ENCODE measurements at regions of chr15 and their contacts with region 1.

Region 1: DNA sequence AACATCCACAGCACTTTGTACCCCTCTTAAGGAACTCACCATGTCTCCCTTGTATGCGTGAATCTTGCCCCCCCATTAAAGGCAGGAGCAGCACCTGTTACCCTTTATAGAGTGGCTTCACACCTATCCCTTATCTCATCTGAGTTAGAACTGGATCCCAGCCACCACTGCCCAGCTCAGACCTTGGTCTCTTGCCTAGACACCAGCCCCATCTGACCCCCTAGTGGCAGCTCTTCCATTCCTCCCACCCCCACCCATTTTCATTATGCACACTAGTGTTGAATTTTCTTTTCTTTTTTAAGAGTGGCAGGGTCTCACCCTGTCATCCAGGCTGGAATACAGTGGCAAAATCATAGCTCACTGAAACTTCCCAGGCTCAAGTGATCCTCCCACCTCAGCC is 3.2 kb upstream of the ZFYVE19 start:
- DNase-seq: no peak
- H3K4me3 ChIP-seq: no peak overlapping the region
- H3K27ac ChIP-seq: peak overlapping the region in 1 of 2 donors; percentile 33
- H3K4me1 ChIP-seq: peaks cover 0 to 3% of the 10 kb centered on the region in 2 donors
- H3K27me3 ChIP-seq: no peaks in the 10 kb centered on the region
- CTCF ChIP-seq: no peak
- POLR2A ChIP-seq: no peak

Region 2: GRCh38 chr15:39580117-39580484 is 1223.6 kb before region 1 on chr15:
- intact Hi-C with region 1: no loop called
- DNase-seq: peak; percentile 93
- H3K4me3 ChIP-seq: peak overlapping the region; percentile 55 to 88 (median 71)
- H3K27ac ChIP-seq: peak overlapping the region; percentile 96
- H3K4me1 ChIP-seq: peaks cover 0 to 3% of the 10 kb centered on the region in 2 donors
- H3K27me3 ChIP-seq: no peaks in the 10 kb centered on the region
- CTCF ChIP-seq: peak; percentile 76 to 99 (median 89)
- POLR2A ChIP-seq: no peak

Region 3: GRCh38 chr15:40843885-40844695 is 40.4 kb after region 1 on chr15 and contains the start of gene SPINT1:
- intact Hi-C with region 1: loop called (anchors 2 kb)
- DNase-seq: peak; percentile 65 to 77
- H3K4me3 ChIP-seq: peak within 1 kb of the TSS; percentile 49 to 80 (median 68)
- H3K27ac ChIP-seq: peak within 1 kb of the TSS; percentile 94 to 96
- H3K4me1 ChIP-seq: no peaks in the 10 kb centered on the region
- H3K27me3 ChIP-seq: no peaks in the 10 kb centered on the region
- CTCF ChIP-seq: no peak
- POLR2A ChIP-seq: peak; percentile 65
- total RNA-seq, gene SPINT1: 1.8 to 134 (median 86.5) TPM

Region 4: DNA sequence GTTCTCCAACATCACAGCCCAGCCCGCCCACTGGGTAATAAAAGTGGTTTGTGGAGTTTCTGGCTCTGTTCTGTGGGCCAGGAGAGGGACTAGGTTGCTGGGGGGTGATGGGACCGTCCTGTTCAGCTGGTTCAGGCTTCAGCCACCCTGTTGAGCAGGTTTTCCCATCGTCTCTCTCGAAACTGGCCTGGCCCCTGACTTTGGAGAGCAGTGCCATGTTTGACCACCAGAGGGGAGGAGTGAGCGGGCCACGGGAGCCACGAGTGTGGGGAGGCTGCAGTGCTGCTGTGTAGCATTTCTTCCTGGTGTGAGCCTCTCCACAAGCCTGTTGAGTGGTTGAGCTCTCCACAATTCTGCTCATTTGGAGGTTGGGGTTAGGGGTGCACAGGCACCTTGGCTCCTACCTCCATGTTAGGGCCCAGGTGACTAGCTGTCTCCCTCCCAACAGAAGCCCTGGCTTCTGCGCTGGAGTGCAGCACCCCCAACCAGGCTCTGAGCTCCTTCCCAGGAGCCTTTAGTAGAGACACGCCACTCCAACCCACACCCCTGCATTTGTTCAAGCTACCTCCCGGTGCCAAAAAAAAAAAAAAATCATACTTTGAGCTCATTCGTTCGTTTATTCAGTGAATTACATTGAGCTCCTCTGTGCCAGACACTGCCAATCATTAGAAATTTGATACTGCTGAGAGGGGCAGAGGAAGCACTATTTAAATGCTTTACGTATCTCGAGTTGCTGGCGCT is 54.1 kb after region 1 on chr15:
- intact Hi-C with region 1: no loop called
- DNase-seq: peak; percentile 84 to 92
- H3K4me3 ChIP-seq: no peak overlapping the region
- H3K27ac ChIP-seq: peak overlapping the region; percentile 80 to 88
- H3K4me1 ChIP-seq: peaks cover 0 to 5% of the 10 kb centered on the region in 2 donors
- H3K27me3 ChIP-seq: no peaks in the 10 kb centered on the region
- CTCF ChIP-seq: peak; percentile 91 to 99 (median 98)
- POLR2A ChIP-seq: no peak

Measured in breast epithelium (tissue), 4 donors.